Activated T-helper 1 cell treated with anti-CD3 and anti-CD28 coated beads, Interleukin-12 subunit alpha, Interleukin-12 subunit beta, Interleukin-2, Interleukin-4 antibody, amounts not matched to agents 30 ng/mL and 10 ng/mL and 1 ng/mL, durations not matched to agents 14 hours and 24 hours and 36 hours (primary cell): ENCODE measurements at regions of chr1 and their contacts with region 1.

Region 1: DNA sequence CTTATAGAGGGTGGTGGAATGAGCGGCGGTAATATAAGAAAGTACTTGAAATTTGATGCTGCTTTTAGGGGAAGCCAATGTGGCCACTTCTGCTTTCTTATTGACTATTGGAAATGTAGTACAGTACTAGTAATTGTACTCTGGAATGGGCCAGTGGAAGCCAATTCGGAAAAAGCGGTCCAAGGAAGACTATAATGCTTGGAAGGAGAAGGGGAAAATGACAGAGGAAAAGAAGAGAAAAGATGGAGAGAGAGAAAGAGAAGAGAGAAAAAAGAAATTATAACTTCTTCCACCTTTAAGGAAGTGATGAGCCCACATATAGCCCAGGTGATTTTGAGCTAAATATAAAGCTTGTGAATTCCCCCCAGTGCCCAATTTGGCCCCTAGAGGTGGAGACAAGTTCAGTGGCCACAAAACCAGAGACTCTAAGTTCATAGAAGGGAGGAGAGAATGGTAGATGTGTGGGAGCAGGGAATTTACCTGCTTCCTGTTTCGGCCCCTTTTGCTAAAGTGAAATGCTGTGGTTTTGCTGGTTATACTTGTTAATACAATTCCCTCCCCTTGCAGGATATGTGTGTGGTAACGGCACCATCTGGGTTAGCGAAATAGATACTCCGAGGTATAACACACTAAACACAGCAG is 35.7 kb upstream of the DUSP10 start:
- DNase-seq: peak; percentile 55
- H3K4me3 Mint-ChIP-seq: peak overlapping the region; percentile 79
- H3K27ac Mint-ChIP-seq: peak overlapping the region; percentile 98
- H3K4me1 Mint-ChIP-seq: peaks cover 92% of the 10 kb centered on the region
- H3K27me3 Mint-ChIP-seq: no peaks in the 10 kb centered on the region

Region 2: GRCh38 chr1:221487781-221488524 is 289.6 kb before region 1 on chr1:
- intact Hi-C with region 1: no loop called
- DNase-seq: no peak
- H3K4me3 Mint-ChIP-seq: no peak overlapping the region
- H3K27ac Mint-ChIP-seq: no peak overlapping the region
- H3K4me1 Mint-ChIP-seq: no peaks in the 10 kb centered on the region
- H3K27me3 Mint-ChIP-seq: no peaks in the 10 kb centered on the region

Region 3: DNA sequence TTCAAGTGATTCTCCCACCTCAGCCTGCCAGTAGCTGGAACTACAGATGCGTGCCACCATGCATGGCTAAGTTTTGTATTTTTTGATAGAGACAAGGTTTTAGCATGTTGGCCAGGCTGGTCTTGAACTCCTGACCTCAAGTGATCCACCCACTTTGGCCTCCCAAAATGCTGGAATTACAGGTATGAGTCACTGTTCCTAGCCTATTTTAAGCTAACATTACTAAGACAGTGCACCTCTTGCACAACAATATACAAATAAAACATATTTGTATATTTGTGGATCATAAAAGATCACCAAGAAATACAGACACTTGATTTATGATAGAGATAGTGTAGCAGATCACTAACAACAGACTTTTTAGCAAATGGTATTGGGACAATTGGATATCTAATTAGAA is 174.7 kb before region 1 on chr1:
- intact Hi-C with region 1: no loop called
- DNase-seq: no peak
- H3K4me3 Mint-ChIP-seq: no peak overlapping the region
- H3K27ac Mint-ChIP-seq: no peak overlapping the region
- H3K4me1 Mint-ChIP-seq: no peaks in the 10 kb centered on the region
- H3K27me3 Mint-ChIP-seq: peaks cover 7% of the 10 kb centered on the region

Region 4: GRCh38 chr1:221753828-221754188 is 23.7 kb before region 1 on chr1:
- intact Hi-C with region 1: loop called (anchors 1 kb)
- DNase-seq: no peak
- H3K4me3 Mint-ChIP-seq: peak overlapping the region; percentile 59
- H3K27ac Mint-ChIP-seq: peak overlapping the region; percentile 82
- H3K4me1 Mint-ChIP-seq: peaks cover 69% of the 10 kb centered on the region
- H3K27me3 Mint-ChIP-seq: no peaks in the 10 kb centered on the region

Region 5: DNA sequence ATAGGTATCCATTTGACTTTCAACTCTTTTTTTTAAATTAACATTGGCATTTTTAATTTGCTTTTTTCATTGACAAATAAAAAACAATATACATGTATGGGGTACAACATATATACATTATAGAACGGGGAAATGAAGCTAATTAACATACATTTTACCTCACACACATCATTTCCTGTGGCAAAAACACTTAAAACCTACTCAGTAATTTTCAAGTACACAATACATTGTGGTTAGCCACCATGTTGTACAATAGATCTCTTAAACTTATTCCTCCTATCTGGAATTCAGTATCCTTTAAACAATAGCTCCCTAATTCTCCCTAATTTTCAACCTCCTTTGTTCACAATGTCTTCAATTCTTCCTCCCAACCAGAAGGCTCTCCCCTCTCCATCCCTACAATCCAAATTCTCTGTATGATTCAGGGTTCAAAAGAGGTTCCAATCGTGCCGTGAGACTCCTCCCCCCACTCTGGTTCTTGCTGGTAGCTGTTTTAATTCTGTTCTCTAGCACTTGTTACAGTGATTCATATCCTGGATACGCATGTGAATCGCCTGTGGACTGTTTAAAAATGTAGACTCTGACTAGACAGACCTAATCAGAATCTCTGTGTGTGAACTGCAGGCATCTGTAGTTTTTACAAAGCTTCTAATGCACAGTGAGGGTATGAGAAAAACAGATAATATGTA is 51.9 kb after region 1 on chr1:
- intact Hi-C with region 1: loop called (anchors 1 kb)
- DNase-seq: peak; percentile 48
- H3K4me3 Mint-ChIP-seq: peak overlapping the region; percentile 73
- H3K27ac Mint-ChIP-seq: peak overlapping the region; percentile 97
- H3K4me1 Mint-ChIP-seq: peaks cover 91% of the 10 kb centered on the region
- H3K27me3 Mint-ChIP-seq: no peaks in the 10 kb centered on the region

Region 6: GRCh38 chr1:221961532-221962292 is 184.2 kb after region 1 on chr1:
- intact Hi-C with region 1: loop called (anchors 2 kb)
- DNase-seq: peak; percentile 38
- H3K4me3 Mint-ChIP-seq: peak overlapping the region; percentile 23
- H3K27ac Mint-ChIP-seq: no peak overlapping the region
- H3K4me1 Mint-ChIP-seq: peaks cover 16% of the 10 kb centered on the region
- H3K27me3 Mint-ChIP-seq: peaks cover 4% of the 10 kb centered on the region